ENCODE measurements at regions of chr2 and their contacts with region 1.

Region 1: GRCh38 chr2:231297108-231297908 is 98.2 kb upstream of the B3GNT7 start:
- DNase-seq: peak; percentile 63 to 82 (median 76)
- H3K4me3 ChIP-seq: no peak overlapping the region
- H3K27ac ChIP-seq: peak overlapping the region in 43 of 59 donors; percentile 1 to 71 (median 33)
- H3K27me3 ChIP-seq: no peaks in the 10 kb centered on the region
- CTCF ChIP-seq: peak in 55 of 56 donors; percentile 44 to 92 (median 78)

Region 2: DNA sequence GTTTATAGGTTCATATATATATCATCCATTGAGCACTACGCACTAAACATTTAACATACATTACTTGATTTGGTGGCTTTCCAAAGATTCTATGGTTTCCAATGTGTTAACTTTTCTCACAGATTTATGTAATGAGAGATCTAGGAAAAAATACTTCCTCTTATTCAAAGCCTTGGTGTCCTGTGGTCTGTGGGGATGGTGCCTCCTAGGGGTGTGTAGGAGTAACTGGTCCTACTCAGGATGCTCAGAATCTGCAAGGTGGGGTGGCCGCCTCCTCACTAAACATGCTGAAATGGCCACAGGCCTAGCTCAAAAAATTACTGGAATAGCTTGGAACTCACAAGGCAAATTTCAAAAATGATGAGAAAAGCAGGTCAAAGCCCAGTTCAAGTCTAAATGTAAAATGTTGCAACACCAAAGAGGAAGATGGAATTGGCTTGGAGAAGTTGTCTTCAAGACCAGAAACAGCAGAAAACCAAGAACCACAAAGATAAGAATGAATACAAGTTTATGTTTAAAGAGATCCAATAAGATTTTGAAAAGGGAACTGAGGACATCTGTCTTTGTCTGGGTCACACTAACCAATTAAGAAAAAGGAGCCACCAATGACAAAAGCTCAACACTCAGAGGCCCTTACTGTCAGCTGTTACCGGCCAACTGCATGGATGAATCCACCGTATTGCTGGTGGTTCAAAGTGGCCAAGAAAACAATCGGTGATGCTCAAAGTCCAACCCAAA is 383.7 kb before region 1 on chr2:
- intact Hi-C with region 1: no loop called
- DNase-seq: peak in 8 of 10 donors; percentile 20 to 59 (median 42)
- H3K4me3 ChIP-seq: no peak overlapping the region
- H3K27ac ChIP-seq: no peak overlapping the region
- H3K27me3 ChIP-seq: no peaks in the 10 kb centered on the region
- CTCF ChIP-seq: peak; percentile 26 to 75 (median 58)

Region 3: GRCh38 chr2:231132126-231132525 is 165.2 kb before region 1 on chr2:
- intact Hi-C with region 1: no loop called
- DNase-seq: no peak
- H3K4me3 ChIP-seq: no peak overlapping the region
- H3K27ac ChIP-seq: no peak overlapping the region
- H3K27me3 ChIP-seq: no peaks in the 10 kb centered on the region
- CTCF ChIP-seq: no peak

Region 4: GRCh38 chr2:231227309-231228162 is 69.8 kb before region 1 on chr2:
- intact Hi-C with region 1: loop called in 1 of 2 experiments (anchors 5 kb)
- DNase-seq: peak in 9 of 10 donors; percentile 55 to 83 (median 61)
- H3K4me3 ChIP-seq: no peak overlapping the region
- H3K27ac ChIP-seq: peak overlapping the region in 46 of 59 donors; percentile 0 to 81 (median 60)
- H3K27me3 ChIP-seq: no peaks in the 10 kb centered on the region
- CTCF ChIP-seq: peak; percentile 61 to 98 (median 88)

Region 5: GRCh38 chr2:231323316-231323715 is 26.0 kb after region 1 on chr2:
- intact Hi-C with region 1: no loop called
- DNase-seq: no peak
- H3K4me3 ChIP-seq: no peak overlapping the region
- H3K27ac ChIP-seq: no peak overlapping the region
- H3K27me3 ChIP-seq: no peaks in the 10 kb centered on the region
- CTCF ChIP-seq: no peak

Region 6: DNA sequence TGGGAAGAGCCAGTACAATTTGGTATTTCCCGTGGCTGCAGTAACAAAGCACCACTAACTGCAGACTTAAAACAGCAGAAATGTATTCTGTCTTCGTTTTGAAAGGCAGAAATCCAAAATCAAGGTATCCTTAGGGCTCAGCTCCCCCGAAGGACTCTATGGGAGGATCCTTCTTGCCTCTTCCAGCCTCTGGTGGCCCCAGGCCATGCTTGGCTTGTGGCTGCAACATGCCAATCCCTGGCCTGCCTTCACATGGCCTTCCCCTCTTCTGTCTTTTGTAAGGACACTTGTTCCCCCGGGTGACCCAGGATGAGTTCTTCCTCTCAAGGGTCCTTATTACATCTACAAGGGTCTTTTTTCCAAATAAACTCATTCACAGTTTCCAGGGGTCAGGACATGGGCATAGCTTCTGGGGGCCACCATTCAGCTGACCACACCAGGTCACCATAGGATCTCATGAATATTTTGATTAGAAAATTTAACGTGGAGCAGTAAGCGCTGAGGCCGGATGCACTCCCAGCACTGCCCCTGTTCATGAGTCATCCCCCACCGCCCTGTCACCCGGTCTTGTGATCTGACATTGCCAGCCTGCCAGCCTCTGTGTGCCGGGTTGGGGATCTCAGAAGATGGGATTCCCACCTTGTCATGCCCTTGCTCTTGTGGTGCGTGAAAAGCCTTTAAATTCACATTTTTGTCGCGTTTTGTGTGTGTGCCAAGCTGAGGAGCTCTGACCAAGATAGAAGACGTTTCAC is 37.0 kb after region 1 on chr2:
- intact Hi-C with region 1: no loop called
- DNase-seq: peak in 1 of 10 donors; percentile 13
- H3K4me3 ChIP-seq: no peak overlapping the region
- H3K27ac ChIP-seq: peak overlapping the region in 1 of 59 donors; percentile 2
- H3K27me3 ChIP-seq: no peaks in the 10 kb centered on the region
- CTCF ChIP-seq: no peak

Region 7: GRCh38 chr2:231348704-231349373 is 51.5 kb after region 1 on chr2:
- intact Hi-C with region 1: loop called in 1 of 2 experiments (anchors 1 kb)
- DNase-seq: peak in 3 of 10 donors; percentile 44 to 72 (median 54)
- H3K4me3 ChIP-seq: peak overlapping the region in 1 of 59 donors; percentile 32
- H3K27ac ChIP-seq: peak overlapping the region in 56 of 59 donors; percentile 27 to 92 (median 78)
- H3K27me3 ChIP-seq: no peaks in the 10 kb centered on the region
- CTCF ChIP-seq: peak in 4 of 56 donors; percentile 10 to 12 (median 11)

Region 8: DNA sequence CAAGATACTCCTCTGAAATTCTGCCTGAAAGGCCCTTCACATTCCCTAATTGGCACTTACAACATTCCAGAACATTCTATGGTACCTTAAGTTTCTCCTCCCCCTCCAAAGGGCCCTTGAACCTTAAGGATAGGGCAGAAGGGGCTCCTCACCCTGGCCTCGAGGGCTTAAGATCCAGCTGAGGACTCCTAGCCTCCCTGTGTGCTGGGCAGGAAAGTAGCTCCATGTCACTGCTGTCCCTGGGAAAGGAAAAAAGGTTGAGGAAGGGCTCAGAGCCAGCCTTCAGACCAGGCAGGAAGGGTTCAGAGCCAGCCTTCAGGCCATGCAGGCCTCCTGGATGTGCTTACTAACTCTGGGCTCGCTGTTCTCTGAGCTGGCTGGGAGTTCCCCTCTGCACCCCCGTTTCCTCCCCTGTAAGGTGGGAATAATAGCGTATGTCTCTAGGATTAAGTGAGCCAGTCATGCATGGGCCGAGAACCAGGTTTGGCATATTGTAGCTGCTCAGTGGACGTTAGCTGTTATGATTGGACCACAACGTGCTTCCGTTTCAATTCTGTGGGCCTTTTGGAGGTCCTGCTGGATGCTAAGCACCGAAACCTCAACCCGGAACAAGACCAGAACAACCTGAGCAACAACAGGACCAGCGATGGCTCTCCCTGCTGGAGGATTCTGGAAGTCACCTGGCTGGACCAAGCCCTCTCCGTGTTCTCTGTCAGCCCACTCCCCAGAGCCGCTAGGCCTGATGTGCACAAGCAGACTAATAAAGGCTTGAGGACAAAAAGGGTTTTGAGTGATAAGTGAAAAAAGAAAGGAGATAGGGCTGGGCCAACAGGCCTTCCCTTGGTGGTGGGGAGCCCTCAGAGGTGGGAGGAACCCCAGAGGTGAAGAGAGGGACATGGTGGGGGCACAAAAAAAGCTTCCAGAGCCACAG is 97.2 kb after region 1 on chr2:
- intact Hi-C with region 1: loop called in 1 of 2 experiments (anchors 5 kb)
- DNase-seq: no peak
- H3K4me3 ChIP-seq: peak overlapping the region in 5 of 59 donors; percentile 50 to 68 (median 57)
- H3K27ac ChIP-seq: peak overlapping the region in 14 of 59 donors; percentile 14 to 96 (median 38)
- H3K27me3 ChIP-seq: peaks cover 0 to 30% (median 9%) of the 10 kb centered on the region in 45 donors
- CTCF ChIP-seq: peak in 1 of 56 donors; percentile 6

Region 9: GRCh38 chr2:231399853-231400680 is 102.8 kb after region 1 on chr2:
- intact Hi-C with region 1: loop called (anchors 2 to 5 kb)
- DNase-seq: peak in 3 of 10 donors; percentile 50 to 58 (median 51)
- H3K4me3 ChIP-seq: peak overlapping the region in 1 of 59 donors; percentile 12
- H3K27ac ChIP-seq: peak overlapping the region in 46 of 59 donors; percentile 10 to 88 (median 63)
- H3K27me3 ChIP-seq: peaks cover 0 to 15% (median 3%) of the 10 kb centered on the region in 45 donors
- CTCF ChIP-seq: peak in 14 of 56 donors; percentile 6 to 38 (median 26)

Region 10: GRCh38 chr2:231411831-231412617 is 114.7 kb after region 1 on chr2:
- intact Hi-C with region 1: loop called in 1 of 2 experiments (anchors 5 kb)
- DNase-seq: peak; percentile 78 to 93 (median 86)
- H3K4me3 ChIP-seq: peak overlapping the region; percentile 50 to 89 (median 71)
- H3K27ac ChIP-seq: peak overlapping the region in 37 of 59 donors; percentile 2 to 84 (median 51)
- H3K27me3 ChIP-seq: no peaks in the 10 kb centered on the region
- CTCF ChIP-seq: peak; percentile 33 to 96 (median 88)

Measured in dorsolateral prefrontal cortex (tissue), 120 donors.